Calu3 (cell line): ENCODE measurements at regions of chr13 and their contacts with region 1.

Region 1: GRCh38 chr13:23871616-23872220 is 17.5 kb downstream of the MIPEP start:
- DNase-seq: no peak
- H3K4me3 Mint-ChIP-seq: no peak overlapping the region
- H3K27ac Mint-ChIP-seq: no peak overlapping the region
- H3K4me1 Mint-ChIP-seq: no peaks in the 10 kb centered on the region
- H3K27me3 Mint-ChIP-seq: no peaks in the 10 kb centered on the region
- CTCF ChIP-seq: peak; percentile 29

Region 2: DNA sequence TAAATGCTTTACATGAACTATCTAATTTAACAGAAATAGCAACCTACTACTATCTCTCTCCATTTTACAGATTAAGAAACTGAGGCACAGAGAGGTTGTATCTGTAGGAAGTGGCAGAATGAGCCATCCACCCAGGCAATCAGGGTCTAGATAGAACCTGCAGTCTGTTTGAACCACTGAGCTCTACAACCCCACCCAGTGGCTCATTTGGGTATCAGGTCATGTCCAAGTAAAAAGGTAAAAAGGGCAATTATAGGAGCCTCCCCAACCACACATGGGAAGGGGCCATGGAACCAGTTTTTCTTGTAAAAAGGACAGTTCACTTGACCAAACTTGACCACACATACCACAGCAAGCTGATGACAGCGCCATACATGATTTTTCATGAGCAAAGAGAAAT is 783.8 kb before region 1 on chr13:
- CTCF ChIA-PET with region 1: no interaction called
- intact Hi-C with region 1: loop called (anchors 10 kb)
- DNase-seq: peak; percentile 32
- H3K4me3 Mint-ChIP-seq: no peak overlapping the region
- H3K27ac Mint-ChIP-seq: no peak overlapping the region
- H3K4me1 Mint-ChIP-seq: no peaks in the 10 kb centered on the region
- H3K27me3 Mint-ChIP-seq: no peaks in the 10 kb centered on the region
- CTCF ChIP-seq: no peak

Region 3: DNA sequence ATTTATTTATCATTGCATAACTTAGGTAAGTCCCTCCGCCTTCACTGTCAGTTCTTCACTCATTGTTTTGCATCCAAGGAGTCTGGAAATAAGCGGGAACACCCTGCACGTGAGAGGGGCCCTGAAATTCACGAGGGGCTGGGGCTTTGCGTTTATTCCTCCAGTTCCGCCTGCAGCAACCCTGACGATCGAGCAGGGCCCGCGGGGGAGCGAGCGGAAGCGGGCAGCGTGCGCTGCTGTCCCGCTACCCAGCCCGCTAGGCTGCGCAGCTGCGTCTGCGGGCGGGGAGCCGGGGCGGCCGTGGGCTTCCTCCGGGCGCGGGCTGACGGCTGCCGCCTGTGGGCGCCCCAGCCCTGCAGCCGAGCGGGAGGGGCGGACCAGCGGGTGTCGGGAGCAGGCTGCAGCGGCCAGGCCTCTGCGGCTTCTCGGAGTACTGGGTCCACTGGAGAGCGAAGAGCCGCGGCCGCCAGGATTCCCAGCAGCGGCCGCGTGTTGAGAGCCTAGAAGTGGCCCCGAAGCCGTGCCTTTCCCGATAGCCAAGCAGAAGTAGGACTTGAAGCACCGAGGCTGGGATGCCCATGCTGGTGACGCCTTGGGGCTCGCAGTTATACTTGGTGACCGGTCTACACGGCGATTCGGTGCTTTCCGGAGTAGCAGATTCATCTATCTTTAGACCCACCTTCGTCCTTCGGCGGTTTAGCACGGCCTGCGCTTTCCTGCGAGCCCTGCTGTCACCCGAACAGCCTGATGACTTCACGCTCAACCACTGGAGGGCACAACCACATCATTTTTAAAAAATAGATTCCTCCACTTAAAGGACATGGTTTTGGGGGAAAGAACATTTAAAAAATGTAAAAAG is 405.3 kb before region 1 on chr13:
- CTCF ChIA-PET with region 1: no interaction called
- intact Hi-C with region 1: loop called (anchors 1 kb)
- DNase-seq: peak; percentile 62
- H3K4me3 Mint-ChIP-seq: peak overlapping the region; percentile 65
- H3K27ac Mint-ChIP-seq: peak overlapping the region; percentile 6
- H3K4me1 Mint-ChIP-seq: peaks cover 26% of the 10 kb centered on the region
- H3K27me3 Mint-ChIP-seq: no peaks in the 10 kb centered on the region
- CTCF ChIP-seq: no peak

Region 4: GRCh38 chr13:23510979-23511735 is 360.6 kb before region 1 on chr13:
- CTCF ChIA-PET with region 1: no interaction called
- intact Hi-C with region 1: loop called (anchors 5 kb)
- DNase-seq: no peak
- H3K4me3 Mint-ChIP-seq: no peak overlapping the region
- H3K27ac Mint-ChIP-seq: no peak overlapping the region
- H3K4me1 Mint-ChIP-seq: peaks cover 11% of the 10 kb centered on the region
- H3K27me3 Mint-ChIP-seq: no peaks in the 10 kb centered on the region
- CTCF ChIP-seq: no peak

Region 5: GRCh38 chr13:23579896-23580683 is 291.6 kb before region 1 on chr13:
- CTCF ChIA-PET with region 1: no interaction called
- intact Hi-C with region 1: loop called (anchors 5 kb)
- DNase-seq: no peak
- H3K4me3 Mint-ChIP-seq: peak overlapping the region; percentile 81
- H3K27ac Mint-ChIP-seq: no peak overlapping the region
- H3K4me1 Mint-ChIP-seq: peaks cover 10% of the 10 kb centered on the region
- H3K27me3 Mint-ChIP-seq: no peaks in the 10 kb centered on the region
- CTCF ChIP-seq: no peak

Region 6: GRCh38 chr13:23599083-23599925 is 272.4 kb before region 1 on chr13:
- CTCF ChIA-PET with region 1: no interaction called
- intact Hi-C with region 1: loop called (anchors 5 kb)
- DNase-seq: peak; percentile 41
- H3K4me3 Mint-ChIP-seq: peak overlapping the region; percentile 46
- H3K27ac Mint-ChIP-seq: peak overlapping the region; percentile 98
- H3K4me1 Mint-ChIP-seq: peaks cover 44% of the 10 kb centered on the region
- H3K27me3 Mint-ChIP-seq: no peaks in the 10 kb centered on the region
- CTCF ChIP-seq: no peak

Region 7: GRCh38 chr13:23715762-23716235 is 155.9 kb before region 1 on chr13:
- CTCF ChIA-PET with region 1: no interaction called
- intact Hi-C with region 1: loop called (anchors 2 kb)
- DNase-seq: peak; percentile 43
- H3K4me3 Mint-ChIP-seq: no peak overlapping the region
- H3K27ac Mint-ChIP-seq: no peak overlapping the region
- H3K4me1 Mint-ChIP-seq: no peaks in the 10 kb centered on the region
- H3K27me3 Mint-ChIP-seq: no peaks in the 10 kb centered on the region
- CTCF ChIP-seq: peak; percentile 31